A673 (cell line): ENCODE measurements at regions of chr4 and their contacts with region 1.

Region 1: GRCh38 chr4:188270273-188271069 is 131.2 kb downstream of the TRIML1 start:
- DNase-seq: no peak
- H3K4me3 ChIP-seq: no peak overlapping the region
- H3K27ac ChIP-seq: no peak overlapping the region
- H3K4me1 ChIP-seq: no peaks in the 10 kb centered on the region
- H3K27me3 ChIP-seq: peaks cover 7% of the 10 kb centered on the region
- CTCF ChIP-seq: no peak

Region 2: GRCh38 chr4:188061083-188061482 is 209.4 kb before region 1 on chr4:
- CTCF ChIA-PET with region 1: interaction called, 20 read pairs
- POLR2A ChIA-PET with region 1: no interaction called
- intact Hi-C with region 1: no loop called
- DNase-seq: no peak
- H3K4me3 ChIP-seq: no peak overlapping the region
- H3K27ac ChIP-seq: no peak overlapping the region
- H3K4me1 ChIP-seq: no peaks in the 10 kb centered on the region
- H3K27me3 ChIP-seq: peaks cover 5% of the 10 kb centered on the region
- CTCF ChIP-seq: no peak